WTC11 (cell line): ENCODE measurements at regions of chr13 and their contacts with region 1.

Region 1: GRCh38 chr13:27379694-27380641 is 44.5 kb upstream of the GTF3A start:
- DNase-seq: peak; percentile 85
- ATAC-seq: peak; percentile 84
- H3K4me3 Mint-ChIP-seq: no peak overlapping the region
- H3K27ac Mint-ChIP-seq: no peak overlapping the region
- H3K4me1 Mint-ChIP-seq: peaks cover 25% of the 10 kb centered on the region
- H3K27me3 Mint-ChIP-seq: no peaks in the 10 kb centered on the region; the same call in 1 of the 2 replicates
- CTCF ChIP-seq: peak; percentile 73

Region 2: DNA sequence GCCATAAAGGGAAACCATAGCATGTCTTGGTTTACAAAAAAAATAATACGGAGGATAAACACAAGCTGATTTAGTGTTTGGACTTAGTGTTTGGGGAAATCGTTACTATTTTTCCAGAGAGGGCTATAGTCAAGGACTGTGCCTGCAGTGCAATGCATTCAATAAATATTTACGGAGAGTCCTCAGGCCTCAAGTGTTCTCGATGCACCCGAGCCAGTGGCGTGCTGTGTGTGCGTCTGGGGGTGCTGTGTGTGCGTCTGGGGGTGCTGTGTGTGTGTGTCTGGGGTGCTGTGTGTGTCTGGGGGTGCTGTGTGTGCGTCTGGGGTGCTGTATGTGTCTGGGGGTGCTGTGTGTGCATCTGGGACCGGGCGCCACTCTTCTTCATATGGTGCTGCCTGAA is 27.3 kb before region 1 on chr13:
- CTCF ChIA-PET with region 1: no interaction called
- POLR2A ChIA-PET with region 1: no interaction called
- DNase-seq: no peak
- ATAC-seq: no peak
- H3K4me3 Mint-ChIP-seq: no peak overlapping the region
- H3K27ac Mint-ChIP-seq: no peak overlapping the region
- H3K4me1 Mint-ChIP-seq: peaks cover 24% of the 10 kb centered on the region
- H3K27me3 Mint-ChIP-seq: no peaks in the 10 kb centered on the region; the same call in 1 of the 2 replicates
- CTCF ChIP-seq: no peak

Region 3: GRCh38 chr13:27424246-27425157 is 44.5 kb after region 1 on chr13 and contains the start of gene GTF3A:
- CTCF ChIA-PET with region 1: interaction called, 15 read pairs
- POLR2A ChIA-PET with region 1: no interaction called
- DNase-seq: peak; percentile 78
- ATAC-seq: peak; percentile 84
- H3K4me3 Mint-ChIP-seq: peak within 1 kb of the TSS; percentile 80
- H3K27ac Mint-ChIP-seq: peak within 1 kb of the TSS; percentile 20
- H3K4me1 Mint-ChIP-seq: peaks cover 22% of the 10 kb centered on the region
- H3K27me3 Mint-ChIP-seq: peaks cover 19% of the 10 kb centered on the region
- CTCF ChIP-seq: no peak
- total RNA-seq, gene GTF3A: 77.0 to 88.7 TPM (median 78.4 TPM) in 3 replicates